A549 (cell line): ENCODE measurements at regions of chr2 and their contacts with region 1.

Region 1: DNA sequence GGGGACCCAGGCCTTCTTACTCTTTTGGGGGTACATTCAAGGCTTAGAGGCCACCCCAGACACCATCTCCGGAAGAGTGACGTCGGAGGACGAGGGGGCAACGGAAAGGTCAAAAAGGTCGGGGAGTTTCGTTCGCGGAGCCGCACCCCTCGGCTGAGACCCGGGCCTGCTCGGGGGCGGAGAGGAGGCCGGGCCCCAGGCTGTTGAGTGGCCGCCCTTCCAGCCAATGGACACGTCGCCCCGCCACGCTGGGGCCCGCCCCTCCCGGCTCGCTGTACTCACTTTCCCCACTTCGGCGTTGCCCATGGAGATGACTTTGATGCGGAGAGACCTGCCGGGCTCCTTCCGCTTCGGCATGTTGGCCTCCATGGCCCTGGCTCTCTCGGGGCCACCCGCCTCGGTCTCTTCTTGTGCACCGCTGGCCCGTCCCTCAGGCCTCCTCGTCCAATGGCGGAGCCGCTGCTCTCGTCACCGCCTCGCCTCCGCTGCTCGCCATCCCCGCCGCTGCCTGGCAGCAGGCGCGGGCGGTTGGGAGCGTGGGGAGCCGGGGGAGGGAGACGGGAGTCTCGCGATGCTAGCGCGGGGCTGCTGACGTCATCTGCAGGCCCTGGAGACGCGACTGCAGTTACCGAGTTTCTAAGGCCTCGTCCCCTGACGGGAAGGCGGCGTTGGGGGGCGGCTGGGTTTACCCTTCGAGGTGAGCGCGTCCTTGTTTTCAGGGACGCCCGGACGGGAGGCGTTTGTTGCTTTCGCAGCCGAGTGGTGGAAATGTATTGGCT is at the start of gene DNAJC27:
- DNase-seq: peak; percentile 99
- ATAC-seq: peak; percentile 97
- H3K4me3 ChIP-seq: peak within 1 kb of the TSS; percentile 94
- H3K27ac ChIP-seq: peak within 1 kb of the TSS; percentile 93 to 98
- H3K4me1 ChIP-seq: peaks cover 11% of the 10 kb centered on the region; the same call in 2 of the 3 replicates
- CTCF ChIP-seq: no peak
- EP300 ChIP-seq: no peak
- POLR2A ChIP-seq: peak; percentile 93
- RAD21 ChIP-seq: no peak
- polyA plus RNA-seq, gene DNAJC27: 5.2 and 7.8 TPM in 2 replicates

Region 2: GRCh38 chr2:25000503-25001324 is 29.0 kb after region 1 on chr2:
- CTCF ChIA-PET with region 1: interaction called, 28 read pairs
- POLR2A ChIA-PET with region 1: interaction called, 3 read pairs
- DNase-seq: no peak
- ATAC-seq: peak; percentile 35 to 57; a peak in 4 of 6 replicates
- H3K4me3 ChIP-seq: no peak overlapping the region
- H3K27ac ChIP-seq: 0 out of 6 replicates have a peak overlapping the region, but pooled peaks of 1 of the 2 experiments have one; percentile 3
- H3K4me1 ChIP-seq: peaks cover 33% of the 10 kb centered on the region
- CTCF ChIP-seq: no peak
- EP300 ChIP-seq: no peak
- POLR2A ChIP-seq: no peak
- RAD21 ChIP-seq: no peak

Region 3: DNA sequence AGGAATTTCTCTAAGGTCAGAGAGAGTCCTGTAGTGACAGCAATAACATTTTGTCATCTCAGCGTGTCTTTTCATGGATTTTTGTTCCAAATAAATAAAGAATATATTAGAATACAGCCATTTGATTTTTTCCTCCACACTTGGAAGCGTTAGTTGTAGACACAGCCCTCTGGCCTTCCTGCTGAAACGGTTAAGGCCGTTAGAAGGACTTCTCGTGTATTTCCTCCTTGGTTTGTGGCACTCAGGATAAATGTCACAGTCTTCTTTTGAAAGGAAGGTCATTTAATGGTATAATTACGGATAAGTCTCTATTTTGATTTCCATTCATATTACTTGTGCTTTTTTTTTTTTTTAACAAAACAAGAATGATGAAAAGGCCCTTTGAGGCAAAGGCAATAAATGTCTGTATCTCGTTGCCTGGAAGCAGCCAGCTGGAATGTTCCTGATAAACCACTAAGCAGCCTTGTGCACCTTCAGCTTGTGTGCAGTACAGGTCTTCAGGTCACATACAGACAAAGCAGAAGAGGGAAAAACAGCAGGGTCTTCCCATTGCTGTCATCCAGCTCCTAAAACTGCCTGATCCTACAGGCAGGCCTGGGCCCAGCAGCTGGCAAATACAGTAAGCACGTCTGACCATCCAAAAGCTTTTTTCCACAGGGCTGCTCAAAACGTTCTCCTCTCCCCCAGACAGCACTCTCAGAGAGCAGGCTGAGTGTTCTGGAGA is 84.5 kb after region 1 on chr2:
- CTCF ChIA-PET with region 1: interaction called, 23 read pairs
- POLR2A ChIA-PET with region 1: no interaction called
- DNase-seq: no peak
- ATAC-seq: no peak; a peak in 1 of 6 replicates
- H3K4me3 ChIP-seq: no peak overlapping the region
- H3K27ac ChIP-seq: no peak overlapping the region
- H3K4me1 ChIP-seq: no peaks in the 10 kb centered on the region
- CTCF ChIP-seq: no peak
- EP300 ChIP-seq: no peak
- POLR2A ChIP-seq: no peak
- RAD21 ChIP-seq: no peak

Region 4: DNA sequence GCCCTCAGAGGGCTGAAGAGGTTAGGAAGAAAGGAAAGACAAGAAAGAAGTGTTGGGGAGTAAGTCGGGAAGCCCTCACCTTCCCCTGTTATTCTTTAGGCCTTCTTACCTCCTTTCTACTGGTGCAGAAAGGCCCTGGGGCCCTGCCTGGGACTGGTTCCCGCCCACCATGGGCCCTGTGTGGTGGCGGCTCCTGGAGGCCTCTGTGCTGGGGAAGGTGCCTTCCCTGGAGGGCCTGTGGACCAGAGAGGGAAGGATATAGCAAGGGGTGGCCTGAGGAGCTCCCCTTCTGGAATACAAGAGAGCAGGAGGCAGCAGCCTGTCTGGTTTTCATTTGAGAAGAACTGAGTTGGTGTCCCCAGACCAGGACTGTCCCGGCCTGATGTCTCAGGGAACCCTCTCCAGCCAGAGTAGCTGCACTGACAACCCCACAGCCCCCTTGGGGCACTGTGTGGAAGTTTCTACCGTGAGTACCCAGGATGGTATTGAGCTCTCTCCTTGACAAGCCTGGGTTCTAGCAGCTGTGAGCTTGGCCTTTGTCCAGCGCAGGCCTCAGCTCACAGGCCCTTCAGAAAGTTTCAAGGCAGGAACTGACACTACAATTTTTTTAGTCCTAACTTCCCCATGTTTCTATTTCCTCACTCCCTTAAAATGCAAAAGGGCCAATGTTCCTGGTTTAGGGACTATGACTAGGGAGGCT is 117.2 kb after region 1 on chr2:
- CTCF ChIA-PET with region 1: interaction called, 65 read pairs
- POLR2A ChIA-PET with region 1: no interaction called
- DNase-seq: no peak
- ATAC-seq: peak; percentile 22 to 61; a peak in 4 of 6 replicates
- H3K4me3 ChIP-seq: no peak overlapping the region
- H3K27ac ChIP-seq: no peak overlapping the region
- H3K4me1 ChIP-seq: no peaks in the 10 kb centered on the region
- CTCF ChIP-seq: no peak
- EP300 ChIP-seq: no peak
- POLR2A ChIP-seq: no peak
- RAD21 ChIP-seq: no peak

Region 5: GRCh38 chr2:25131567-25132298 is 160.0 kb after region 1 on chr2:
- CTCF ChIA-PET with region 1: interaction called, 375 read pairs
- POLR2A ChIA-PET with region 1: interaction called, 14 read pairs
- DNase-seq: no peak
- ATAC-seq: no peak
- H3K4me3 ChIP-seq: no peak overlapping the region
- H3K27ac ChIP-seq: no peak overlapping the region
- H3K4me1 ChIP-seq: peaks cover 4% of the 10 kb centered on the region; the same call in 2 of the 3 replicates
- CTCF ChIP-seq: no peak
- EP300 ChIP-seq: no peak
- POLR2A ChIP-seq: no peak
- RAD21 ChIP-seq: no peak

Region 6: DNA sequence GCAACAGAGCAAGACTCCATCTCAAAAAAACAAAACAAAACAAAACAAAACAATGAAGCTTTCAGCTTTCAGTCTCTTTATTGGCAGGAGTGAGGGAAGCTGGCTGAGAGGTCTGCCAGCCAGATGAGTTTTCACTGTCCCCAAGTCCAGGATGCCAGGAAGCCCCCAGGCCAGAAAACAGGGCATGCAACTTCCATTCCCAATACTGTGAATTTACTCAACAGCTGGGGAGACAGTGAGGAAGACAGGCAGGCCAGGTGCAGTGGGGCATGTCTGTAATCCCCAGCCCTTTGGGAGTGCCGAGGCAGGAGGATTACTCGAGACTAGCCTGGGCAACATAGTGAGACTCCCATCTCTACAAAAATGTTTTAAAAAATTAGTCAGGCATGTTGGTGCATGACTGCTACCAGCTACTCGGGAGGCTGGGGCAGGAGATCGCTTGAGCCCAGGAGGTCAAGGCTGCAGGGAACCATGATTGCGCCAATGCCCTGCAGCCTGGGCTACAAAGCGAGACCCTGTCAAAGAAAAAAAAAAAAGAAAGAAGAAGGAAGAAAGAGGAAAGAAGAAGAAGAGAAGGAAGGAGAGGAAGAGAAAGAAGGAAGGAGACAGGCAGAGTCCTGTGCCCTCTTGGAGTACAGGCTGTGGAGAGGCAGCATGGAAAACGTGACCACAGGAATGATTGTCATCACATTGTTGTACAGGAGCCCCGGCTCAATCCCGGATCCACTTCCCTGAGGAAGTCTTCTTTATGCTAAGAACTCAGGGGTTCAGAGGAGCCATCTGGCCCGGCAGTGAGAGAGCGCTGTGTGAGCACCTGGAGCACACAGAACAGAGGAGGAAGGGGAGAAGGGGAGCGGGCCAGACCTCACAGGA is 225.8 kb after region 1 on chr2:
- CTCF ChIA-PET with region 1: interaction called, 58 read pairs
- POLR2A ChIA-PET with region 1: interaction called, 10 read pairs
- DNase-seq: no peak
- ATAC-seq: no peak
- H3K4me3 ChIP-seq: no peak overlapping the region
- H3K27ac ChIP-seq: no peak overlapping the region
- H3K4me1 ChIP-seq: no peaks in the 10 kb centered on the region
- CTCF ChIP-seq: no peak
- EP300 ChIP-seq: no peak
- POLR2A ChIP-seq: no peak
- RAD21 ChIP-seq: no peak